ENCODE measurements at regions of chr15 and their contacts with region 1.

Region 1: GRCh38 chr15:57635300-57635909 is 43.7 kb downstream of the MYZAP start:
- DNase-seq: no peak
- H3K4me3 Mint-ChIP-seq: no peak overlapping the region
- H3K27ac Mint-ChIP-seq: no peak overlapping the region
- H3K4me1 Mint-ChIP-seq: no peaks in the 10 kb centered on the region
- H3K27me3 Mint-ChIP-seq: peaks cover 8% of the 10 kb centered on the region

Region 2: DNA sequence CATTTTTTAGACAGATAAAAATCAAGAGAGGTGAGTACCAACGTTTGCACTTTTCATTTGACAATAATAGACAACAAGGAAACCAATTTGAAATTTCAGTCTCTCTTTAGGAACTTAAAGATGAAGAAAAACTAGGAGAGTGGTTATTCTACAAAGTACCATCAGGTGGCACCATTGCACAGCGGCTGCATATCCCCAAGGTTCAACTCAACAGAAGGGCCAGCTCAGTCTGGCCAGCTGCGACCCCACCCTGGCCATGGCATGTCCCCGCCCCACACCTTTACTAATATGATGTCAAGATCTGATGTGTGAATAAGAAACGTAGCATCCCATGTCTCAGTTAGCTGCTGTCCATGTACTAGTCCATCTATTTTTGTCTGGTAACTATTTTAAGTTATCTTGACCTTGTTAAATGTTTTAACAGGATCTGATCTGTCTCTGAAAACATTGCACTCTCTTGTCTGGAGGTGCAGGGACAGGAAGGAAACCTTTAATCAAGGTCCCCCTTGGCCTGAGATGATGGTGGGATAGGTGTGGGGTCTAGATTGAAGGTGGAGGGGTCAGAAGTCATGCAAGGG is 294.6 kb before region 1 on chr15:
- intact Hi-C with region 1: no loop called
- DNase-seq: no peak
- H3K4me3 Mint-ChIP-seq: no peak overlapping the region
- H3K27ac Mint-ChIP-seq: no peak overlapping the region
- H3K4me1 Mint-ChIP-seq: no peaks in the 10 kb centered on the region
- H3K27me3 Mint-ChIP-seq: peaks cover 14% of the 10 kb centered on the region

Region 3: GRCh38 chr15:57376696-57377477 is 258.5 kb before region 1 on chr15:
- intact Hi-C with region 1: no loop called
- DNase-seq: no peak
- H3K4me3 Mint-ChIP-seq: no peak overlapping the region
- H3K27ac Mint-ChIP-seq: no peak overlapping the region
- H3K4me1 Mint-ChIP-seq: no peaks in the 10 kb centered on the region
- H3K27me3 Mint-ChIP-seq: peaks cover 46% of the 10 kb centered on the region

Region 4: DNA sequence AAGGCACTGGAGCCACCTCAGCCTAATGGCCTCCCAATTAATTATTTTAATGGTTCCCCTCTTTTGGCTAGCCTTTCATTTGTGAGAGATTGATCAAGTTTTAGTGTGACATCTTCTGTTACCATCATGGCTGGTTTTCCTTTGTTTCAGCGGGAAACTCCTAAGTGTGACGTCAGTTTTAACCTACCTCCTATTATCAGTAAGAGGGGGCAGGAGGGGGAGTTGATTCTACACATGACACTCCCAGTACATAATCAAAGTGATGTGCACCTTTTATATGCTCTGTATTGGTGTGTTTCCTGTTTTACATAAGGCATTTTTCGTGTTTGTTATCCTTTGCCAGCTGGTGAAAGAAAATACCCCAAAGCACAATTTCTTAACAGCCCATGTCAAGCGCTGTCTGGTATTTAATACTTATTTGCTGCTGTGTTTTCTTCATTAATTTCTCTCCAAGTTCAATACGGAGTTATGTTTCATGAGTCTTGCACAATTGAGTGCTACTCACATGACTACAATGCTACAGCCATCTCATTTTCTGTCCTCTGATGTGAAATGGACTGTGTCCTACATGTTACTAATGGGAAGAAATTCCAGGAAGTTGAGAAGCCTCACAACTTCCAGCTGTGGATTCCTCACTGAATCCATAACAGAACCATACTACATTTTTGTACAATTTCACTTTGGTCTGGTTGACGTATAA is 18.9 kb after region 1 on chr15:
- intact Hi-C with region 1: loop called (anchors 2 kb)
- DNase-seq: no peak
- H3K4me3 Mint-ChIP-seq: no peak overlapping the region
- H3K27ac Mint-ChIP-seq: no peak overlapping the region
- H3K4me1 Mint-ChIP-seq: peaks cover 20% of the 10 kb centered on the region
- H3K27me3 Mint-ChIP-seq: peaks cover 2% of the 10 kb centered on the region

Region 5: DNA sequence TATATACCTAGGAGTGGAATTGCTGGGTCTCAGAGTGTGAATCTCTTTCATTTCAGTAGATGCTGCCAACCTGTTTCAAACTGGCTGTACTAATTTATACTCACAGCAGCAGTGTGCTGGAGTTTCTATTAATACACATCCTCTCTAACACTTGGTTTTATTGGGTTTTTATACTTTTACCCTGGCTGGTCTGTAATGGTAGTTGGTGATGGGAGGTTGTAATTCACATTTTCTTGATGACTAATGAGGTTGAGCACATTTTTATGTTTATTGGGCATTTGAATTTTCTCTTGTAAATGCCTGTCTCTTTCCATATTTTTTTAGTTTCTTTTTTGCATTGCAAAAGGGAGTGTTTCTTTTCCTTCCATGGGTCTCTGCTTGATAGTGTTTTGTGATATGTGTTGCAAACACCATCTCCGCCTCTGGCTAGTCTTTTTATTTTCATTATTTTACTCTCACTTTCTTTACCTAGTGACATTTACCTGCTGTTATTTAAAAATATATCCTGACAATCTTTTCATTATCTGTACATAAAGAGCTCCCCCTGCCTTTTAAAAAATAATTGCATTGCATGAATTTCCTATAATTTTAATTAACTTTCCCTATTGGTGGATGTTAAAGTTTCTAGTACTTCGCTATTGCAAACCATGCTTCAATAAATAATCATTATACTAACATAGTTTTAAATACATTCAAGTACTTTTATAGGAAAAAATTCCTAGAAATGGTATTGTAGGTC is 1927.2 kb after region 1 on chr15:
- intact Hi-C with region 1: no loop called
- DNase-seq: no peak
- H3K4me3 Mint-ChIP-seq: no peak overlapping the region
- H3K27ac Mint-ChIP-seq: no peak overlapping the region
- H3K4me1 Mint-ChIP-seq: no peaks in the 10 kb centered on the region
- H3K27me3 Mint-ChIP-seq: peaks cover 2% of the 10 kb centered on the region

Measured in activated T-helper 1 cell treated with anti-CD3 and anti-CD28 coated beads, Interleukin-12 subunit alpha, Interleukin-12 subunit beta, Interleukin-2, Interleukin-4 antibody, amounts not matched to agents 30 ng/mL and 10 ng/mL and 1 ng/mL, durations not matched to agents 14 hours and 24 hours and 36 hours (primary cell).